RWPE1 (cell line): ENCODE measurements at regions of chr6 and their contacts with region 1.

Region 1: GRCh38 chr6:134822920-134823709 is 126.8 kb downstream of the ALDH8A1 start:
- DNase-seq: peak; percentile 82
- H3K27ac ChIP-seq: no peak overlapping the region
- CTCF ChIP-seq: peak; percentile 91

Region 2: DNA sequence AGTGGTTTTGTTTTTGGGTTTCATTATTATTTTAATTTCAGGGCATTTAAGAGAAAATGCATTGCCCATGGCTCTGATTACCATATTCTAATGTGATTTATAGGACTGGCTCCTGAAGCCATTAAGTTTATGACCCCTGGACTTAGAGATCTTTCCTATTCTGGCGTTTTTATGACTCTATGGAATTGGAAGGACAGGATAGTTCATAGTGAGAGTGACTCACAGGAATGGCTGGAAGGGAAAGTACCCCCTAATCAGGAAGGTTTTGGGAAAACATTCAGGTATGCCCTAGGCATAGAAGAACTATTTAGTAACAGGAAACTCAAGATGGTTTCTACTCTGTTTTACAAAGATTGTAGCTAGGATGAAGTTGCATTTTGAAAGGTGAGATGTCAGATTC is 662.1 kb before region 1 on chr6:
- CTCF ChIA-PET with region 1: interaction called, 11 read pairs
- POLR2A ChIA-PET with region 1: no interaction called
- DNase-seq: peak; percentile 62
- H3K27ac ChIP-seq: no peak overlapping the region
- CTCF ChIP-seq: no peak

Region 3: GRCh38 chr6:134173936-134174671 is 649.0 kb before region 1 on chr6:
- CTCF ChIA-PET with region 1: interaction called, 10 read pairs
- POLR2A ChIA-PET with region 1: no interaction called
- DNase-seq: peak; percentile 65
- H3K27ac ChIP-seq: peak overlapping the region; percentile 96
- CTCF ChIP-seq: peak; percentile 84

Region 4: GRCh38 chr6:134517145-134517658 is 305.9 kb before region 1 on chr6:
- CTCF ChIA-PET with region 1: no interaction called
- POLR2A ChIA-PET with region 1: no interaction called
- DNase-seq: peak; percentile 65
- H3K27ac ChIP-seq: peak overlapping the region; percentile 91
- CTCF ChIP-seq: no peak

Region 5: DNA sequence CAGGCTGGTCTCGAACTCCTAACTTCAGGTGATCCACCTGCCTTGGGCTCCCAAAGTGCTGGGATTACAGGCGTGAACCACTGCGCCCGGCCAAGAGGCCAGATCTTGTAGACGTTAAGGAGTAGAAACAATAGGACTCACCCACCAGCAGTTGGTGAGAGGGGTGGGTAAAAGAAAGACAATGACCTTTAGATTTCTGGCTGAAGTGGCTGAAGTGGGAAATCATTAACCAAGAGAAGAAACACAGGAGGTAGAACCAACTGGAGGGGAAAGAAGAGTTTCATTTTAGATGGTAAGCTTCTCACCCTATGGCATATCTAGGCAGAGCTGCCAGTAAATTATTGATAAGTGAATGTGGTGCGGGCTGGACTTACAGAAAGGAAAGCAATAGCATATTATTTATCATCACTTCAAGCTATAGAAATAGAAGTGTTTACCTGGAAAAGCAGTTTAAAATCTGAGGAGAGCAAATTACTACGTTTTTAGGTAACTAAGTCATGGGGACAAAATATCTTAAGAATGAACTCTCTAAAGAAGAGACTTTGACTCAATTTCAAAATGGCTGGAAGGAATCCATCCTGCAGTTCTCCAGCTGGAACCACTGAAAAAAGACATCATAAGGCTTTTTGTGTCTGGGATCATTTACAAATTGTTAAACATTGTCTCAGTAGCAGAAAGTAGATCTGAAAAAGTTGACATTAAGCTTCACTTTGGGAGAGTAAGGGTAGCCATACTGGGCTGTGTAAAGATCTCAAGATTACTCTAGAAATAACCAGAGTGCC is 17.2 kb after region 1 on chr6:
- CTCF ChIA-PET with region 1: no interaction called
- POLR2A ChIA-PET with region 1: no interaction called
- DNase-seq: no peak
- H3K27ac ChIP-seq: no peak overlapping the region
- CTCF ChIP-seq: no peak

Region 6: DNA sequence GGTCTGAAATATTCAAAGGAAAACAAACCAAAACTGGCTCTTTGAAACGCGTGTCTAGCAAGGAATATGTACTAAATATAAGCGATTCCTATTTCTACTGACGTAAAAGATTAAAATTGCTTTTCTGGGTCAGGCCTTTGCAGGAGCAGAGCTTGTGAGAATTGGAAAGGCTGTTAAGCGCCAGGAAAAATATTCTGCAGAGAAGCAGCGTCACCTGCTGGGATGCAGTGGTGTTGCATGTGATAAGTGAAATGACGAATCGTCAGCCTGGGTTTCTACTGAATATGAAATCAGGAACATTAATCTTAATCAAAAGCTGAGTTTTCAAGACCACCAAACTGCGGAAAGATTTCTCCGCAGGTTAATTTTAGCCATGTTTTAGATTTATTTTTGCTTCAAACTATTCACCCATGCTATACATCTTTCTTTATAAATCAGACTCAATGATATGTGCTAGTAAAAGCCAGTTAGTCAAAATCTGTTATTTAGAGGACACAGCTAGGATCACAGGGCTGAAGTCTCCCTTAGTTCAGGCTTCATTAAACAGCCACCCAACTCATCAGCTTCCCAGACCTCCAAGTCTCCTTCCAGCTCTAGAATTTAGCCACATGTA is 59.4 kb after region 1 on chr6:
- CTCF ChIA-PET with region 1: interaction called, 10 read pairs
- POLR2A ChIA-PET with region 1: no interaction called
- DNase-seq: peak; percentile 53
- H3K27ac ChIP-seq: no peak overlapping the region
- CTCF ChIP-seq: peak; percentile 94

Region 7: GRCh38 chr6:135722679-135723078 is 899.6 kb after region 1 on chr6:
- CTCF ChIA-PET with region 1: no interaction called
- POLR2A ChIA-PET with region 1: no interaction called
- DNase-seq: peak; percentile 79
- H3K27ac ChIP-seq: no peak overlapping the region
- CTCF ChIP-seq: no peak